ENCODE measurements at regions of chr11 and their contacts with region 1.

Region 1: DNA sequence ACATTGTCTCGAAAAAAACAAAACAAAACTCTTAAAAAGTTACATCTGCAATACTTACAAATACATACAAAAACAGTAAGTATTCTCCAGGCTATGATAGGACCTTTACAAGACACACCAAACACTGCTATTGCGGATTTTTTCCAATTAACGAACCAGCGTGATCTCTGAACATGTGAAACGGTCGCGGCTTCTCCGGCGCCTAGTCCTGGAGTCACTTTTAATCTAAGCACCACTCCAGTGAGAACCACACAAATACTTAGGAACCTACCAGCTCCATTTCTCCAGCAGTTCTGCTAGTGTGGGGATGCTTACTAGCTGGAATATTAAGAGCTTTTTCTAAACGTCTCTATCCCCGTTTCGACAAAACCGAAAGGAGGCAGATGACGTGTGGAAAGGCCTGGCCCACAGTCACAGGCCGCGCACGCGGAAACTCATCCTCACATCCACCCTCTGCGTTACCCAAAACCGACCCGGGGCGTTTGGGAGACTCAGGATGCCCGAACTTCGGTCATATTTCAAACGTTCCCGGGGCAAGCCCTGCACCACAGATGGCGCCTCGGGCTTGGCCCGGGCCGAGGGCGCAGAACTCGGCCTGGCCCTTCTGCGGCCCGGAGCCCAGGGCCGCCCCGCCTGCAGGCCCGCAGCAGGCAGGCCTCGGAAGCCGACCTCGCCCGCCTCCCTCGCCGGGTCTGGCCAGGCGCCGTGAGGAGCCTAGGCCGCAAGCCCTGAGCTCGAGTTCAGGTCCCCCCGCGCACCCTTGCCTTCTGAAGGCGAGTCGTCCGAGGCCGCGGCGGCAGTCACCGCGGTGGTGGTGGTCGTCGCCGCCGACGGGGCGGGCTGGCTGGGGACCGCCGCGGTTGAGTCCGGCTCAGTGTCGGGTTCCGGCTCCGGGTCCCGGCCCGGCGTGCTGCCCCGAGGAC is 575 bp downstream of the FNBP4 start:
- DNase-seq: peak; percentile 88
- ATAC-seq: peak; percentile 15
- H3K4me3 ChIP-seq: peak overlapping the region; percentile 49 to 88 (median 78)
- H3K4me3 Mint-ChIP-seq: peak overlapping the region; percentile 97
- H3K27ac ChIP-seq: peak overlapping the region; percentile 91 to 97
- H3K27ac Mint-ChIP-seq: peak overlapping the region; percentile 100
- H3K4me1 ChIP-seq: peaks cover 19 to 24% of the 10 kb centered on the region in 2 donors
- H3K4me1 Mint-ChIP-seq: peaks cover 26% of the 10 kb centered on the region
- H3K27me3 ChIP-seq: no peaks in the 10 kb centered on the region
- H3K27me3 Mint-ChIP-seq: no peaks in the 10 kb centered on the region
- CTCF ChIP-seq: no peak

Region 2: GRCh38 chr11:46700241-46701077 is 1066.1 kb before region 1 on chr11 and contains the starts of genes ARHGAP1 and ZNF408:
- CTCF ChIA-PET with region 1: no interaction called
- POLR2A ChIA-PET with region 1: no interaction called
- intact Hi-C with region 1: loop called (anchors 5 kb)
- DNase-seq: peak; percentile 99
- ATAC-seq: peak; percentile 90
- H3K4me3 ChIP-seq: peak within 1 kb of the TSS; percentile 87 to 100 (median 98)
- H3K4me3 Mint-ChIP-seq: peak within 1 kb of the TSS; percentile 96
- H3K27ac ChIP-seq: peak within 1 kb of the TSS; percentile 47 to 86
- H3K27ac Mint-ChIP-seq: peak within 1 kb of the TSS; percentile 93
- H3K4me1 ChIP-seq: peaks cover 30 to 39% of the 10 kb centered on the region in 2 donors
- H3K4me1 Mint-ChIP-seq: peaks cover 43% of the 10 kb centered on the region
- H3K27me3 ChIP-seq: no peaks in the 10 kb centered on the region
- H3K27me3 Mint-ChIP-seq: no peaks in the 10 kb centered on the region
- CTCF ChIP-seq: no peak
- total RNA-seq, gene ARHGAP1: 55.0 and 56.8 TPM in 2 replicates
- total RNA-seq, gene ZNF408: 19.2 and 22.3 TPM in 2 replicates

Region 3: GRCh38 chr11:47213985-47214564 is 552.5 kb before region 1 on chr11:
- CTCF ChIA-PET with region 1: no interaction called
- POLR2A ChIA-PET with region 1: no interaction called
- intact Hi-C with region 1: loop called (anchors 1 kb)
- DNase-seq: peak; percentile 88
- ATAC-seq: peak; percentile 79
- H3K4me3 ChIP-seq: peak overlapping the region; percentile 71 to 92 (median 76)
- H3K4me3 Mint-ChIP-seq: peak overlapping the region; percentile 98
- H3K27ac ChIP-seq: peak overlapping the region; percentile 89
- H3K27ac Mint-ChIP-seq: peak overlapping the region; percentile 98
- H3K4me1 ChIP-seq: peaks cover 14 to 31% of the 10 kb centered on the region in 2 donors
- H3K4me1 Mint-ChIP-seq: peaks cover 30% of the 10 kb centered on the region
- H3K27me3 ChIP-seq: no peaks in the 10 kb centered on the region
- H3K27me3 Mint-ChIP-seq: no peaks in the 10 kb centered on the region
- CTCF ChIP-seq: no peak

Region 4: GRCh38 chr11:47552566-47553416 is 213.8 kb before region 1 on chr11 and contains the start of gene CELF1:
- CTCF ChIA-PET with region 1: no interaction called
- POLR2A ChIA-PET with region 1: interaction called, 3 read pairs
- intact Hi-C with region 1: loop called (anchors 1 kb)
- DNase-seq: peak; percentile 96
- ATAC-seq: peak; percentile 95
- H3K4me3 ChIP-seq: peak within 1 kb of the TSS; percentile 65 to 94 (median 90)
- H3K4me3 Mint-ChIP-seq: peak within 1 kb of the TSS; percentile 99
- H3K27ac ChIP-seq: peak within 1 kb of the TSS; percentile 72 to 88
- H3K27ac Mint-ChIP-seq: peak within 1 kb of the TSS; percentile 93
- H3K4me1 ChIP-seq: peaks cover 31 to 32% of the 10 kb centered on the region in 2 donors
- H3K4me1 Mint-ChIP-seq: peaks cover 44% of the 10 kb centered on the region
- H3K27me3 ChIP-seq: no peaks in the 10 kb centered on the region
- H3K27me3 Mint-ChIP-seq: no peaks in the 10 kb centered on the region
- CTCF ChIP-seq: peak; percentile 96
- total RNA-seq, gene CELF1: 153 and 167 TPM in 2 replicates

Region 5: DNA sequence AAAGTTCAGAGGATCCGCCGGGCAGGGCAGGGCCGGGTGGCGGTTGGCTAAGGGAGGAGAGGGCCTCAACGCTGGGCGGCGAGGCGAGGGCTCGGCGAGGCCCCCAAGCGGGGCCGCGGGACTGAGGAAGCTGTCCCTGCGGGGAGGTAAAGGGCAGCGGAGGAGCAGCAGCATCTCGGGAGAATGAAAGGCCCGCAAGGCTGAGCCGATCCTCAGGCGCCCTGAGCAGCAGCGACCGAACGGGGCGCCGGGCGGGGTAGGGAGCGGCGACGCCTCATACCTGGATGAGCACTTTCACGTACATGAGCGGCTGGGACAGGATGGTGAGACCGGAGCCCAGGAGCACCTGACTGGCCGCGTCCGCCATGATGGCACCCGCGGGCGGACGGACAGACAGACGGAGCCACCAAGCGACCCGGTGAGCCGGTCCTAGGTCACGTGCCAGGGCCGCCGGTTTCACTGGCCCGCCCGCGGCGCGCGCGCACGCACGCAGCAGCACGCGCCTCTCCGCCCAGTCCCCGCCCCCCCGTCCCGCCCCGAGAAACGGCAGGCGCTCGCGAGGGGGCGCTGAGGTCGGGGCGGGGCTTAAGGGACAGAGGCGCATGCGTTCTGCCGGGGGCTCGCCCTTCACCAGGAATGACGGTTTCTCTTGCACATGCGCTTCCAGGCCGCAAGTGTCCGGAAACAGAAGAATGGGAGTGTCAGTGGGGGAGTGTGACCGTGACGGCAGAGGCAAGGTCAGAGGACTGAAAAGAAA is 124.3 kb before region 1 on chr11 and contains the start of gene MTCH2:
- CTCF ChIA-PET with region 1: no interaction called
- POLR2A ChIA-PET with region 1: no interaction called
- intact Hi-C with region 1: loop called (anchors 1 kb)
- DNase-seq: peak; percentile 99
- ATAC-seq: peak; percentile 94
- H3K4me3 ChIP-seq: peak within 1 kb of the TSS; percentile 79 to 86 (median 79)
- H3K4me3 Mint-ChIP-seq: peak within 1 kb of the TSS; percentile 93
- H3K27ac ChIP-seq: peak within 1 kb of the TSS; percentile 92
- H3K27ac Mint-ChIP-seq: peak within 1 kb of the TSS; percentile 96
- H3K4me1 ChIP-seq: peaks cover 13 to 21% of the 10 kb centered on the region in 2 donors
- H3K4me1 Mint-ChIP-seq: peaks cover 23% of the 10 kb centered on the region
- H3K27me3 ChIP-seq: no peaks in the 10 kb centered on the region
- H3K27me3 Mint-ChIP-seq: no peaks in the 10 kb centered on the region
- CTCF ChIP-seq: peak; percentile 29
- total RNA-seq, gene MTCH2: 26.9 and 30.9 TPM in 2 replicates

Region 6: GRCh38 chr11:47847892-47848635 is 81.5 kb after region 1 on chr11 and contains the start of gene NUP160:
- CTCF ChIA-PET with region 1: interaction called, 3 read pairs
- POLR2A ChIA-PET with region 1: no interaction called
- intact Hi-C with region 1: loop called (anchors 1 kb)
- DNase-seq: peak; percentile 92
- ATAC-seq: peak; percentile 77
- H3K4me3 ChIP-seq: peak within 1 kb of the TSS; percentile 93 to 99 (median 98)
- H3K4me3 Mint-ChIP-seq: peak within 1 kb of the TSS; percentile 99
- H3K27ac ChIP-seq: peak within 1 kb of the TSS; percentile 94 to 95
- H3K27ac Mint-ChIP-seq: peak within 1 kb of the TSS; percentile 98
- H3K4me1 ChIP-seq: peaks cover 62 to 66% of the 10 kb centered on the region in 2 donors
- H3K4me1 Mint-ChIP-seq: peaks cover 57% of the 10 kb centered on the region
- H3K27me3 ChIP-seq: no peaks in the 10 kb centered on the region
- H3K27me3 Mint-ChIP-seq: no peaks in the 10 kb centered on the region
- CTCF ChIP-seq: no peak
- total RNA-seq, gene NUP160: 74.3 and 77.3 TPM in 2 replicates

Region 7: DNA sequence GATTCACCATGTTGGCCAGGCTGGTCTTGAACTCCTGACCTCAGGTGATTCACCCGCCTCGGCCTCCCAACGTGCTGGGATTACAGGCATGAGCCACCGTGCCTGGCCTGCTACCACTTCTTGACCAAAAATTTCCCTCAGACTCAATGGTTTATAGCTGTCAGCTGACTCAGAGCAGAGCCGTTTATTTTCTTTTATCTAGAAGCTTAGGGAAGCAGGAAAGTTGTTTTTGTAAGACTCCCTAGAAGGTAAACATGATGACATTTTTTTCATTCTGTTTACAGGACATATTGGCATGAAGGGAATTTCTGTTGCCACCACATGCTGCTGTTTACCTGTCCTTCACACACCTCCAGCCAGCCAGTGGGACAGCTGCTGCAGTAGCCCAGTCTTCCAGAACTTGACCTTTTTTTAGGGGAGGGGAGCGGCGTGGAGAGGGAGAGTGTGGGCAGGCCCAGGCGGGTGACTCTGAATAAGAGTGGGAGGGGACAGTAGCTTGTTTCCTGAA is 157.7 kb after region 1 on chr11:
- CTCF ChIA-PET with region 1: no interaction called
- POLR2A ChIA-PET with region 1: no interaction called
- intact Hi-C with region 1: loop called (anchors 5 kb)
- DNase-seq: no peak
- ATAC-seq: no peak
- H3K4me3 ChIP-seq: no peak overlapping the region
- H3K4me3 Mint-ChIP-seq: no peak overlapping the region
- H3K27ac ChIP-seq: no peak overlapping the region
- H3K27ac Mint-ChIP-seq: peak overlapping the region; percentile 79
- H3K4me1 ChIP-seq: peaks cover 61 to 81% of the 10 kb centered on the region in 2 donors
- H3K4me1 Mint-ChIP-seq: peaks cover 67% of the 10 kb centered on the region
- H3K27me3 ChIP-seq: no peaks in the 10 kb centered on the region
- H3K27me3 Mint-ChIP-seq: no peaks in the 10 kb centered on the region
- CTCF ChIP-seq: no peak

Measured in B cell (primary cell).